Calu3 (cell line): ENCODE measurements at regions of chr1 and their contacts with region 1.

Region 1: GRCh38 chr1:40862008-40862863 is at the start of gene CITED4:
- DNase-seq: peak; percentile 97
- H3K4me3 Mint-ChIP-seq: peak within 1 kb of the TSS; percentile 91
- H3K27ac Mint-ChIP-seq: peak within 1 kb of the TSS; percentile 95
- H3K4me1 Mint-ChIP-seq: peaks cover 47% of the 10 kb centered on the region
- H3K27me3 Mint-ChIP-seq: peaks cover 18% of the 10 kb centered on the region
- CTCF ChIP-seq: peak; percentile 57
- total RNA-seq, gene CITED4: 81.2 and 85.2 TPM in 2 replicates

Region 2: DNA sequence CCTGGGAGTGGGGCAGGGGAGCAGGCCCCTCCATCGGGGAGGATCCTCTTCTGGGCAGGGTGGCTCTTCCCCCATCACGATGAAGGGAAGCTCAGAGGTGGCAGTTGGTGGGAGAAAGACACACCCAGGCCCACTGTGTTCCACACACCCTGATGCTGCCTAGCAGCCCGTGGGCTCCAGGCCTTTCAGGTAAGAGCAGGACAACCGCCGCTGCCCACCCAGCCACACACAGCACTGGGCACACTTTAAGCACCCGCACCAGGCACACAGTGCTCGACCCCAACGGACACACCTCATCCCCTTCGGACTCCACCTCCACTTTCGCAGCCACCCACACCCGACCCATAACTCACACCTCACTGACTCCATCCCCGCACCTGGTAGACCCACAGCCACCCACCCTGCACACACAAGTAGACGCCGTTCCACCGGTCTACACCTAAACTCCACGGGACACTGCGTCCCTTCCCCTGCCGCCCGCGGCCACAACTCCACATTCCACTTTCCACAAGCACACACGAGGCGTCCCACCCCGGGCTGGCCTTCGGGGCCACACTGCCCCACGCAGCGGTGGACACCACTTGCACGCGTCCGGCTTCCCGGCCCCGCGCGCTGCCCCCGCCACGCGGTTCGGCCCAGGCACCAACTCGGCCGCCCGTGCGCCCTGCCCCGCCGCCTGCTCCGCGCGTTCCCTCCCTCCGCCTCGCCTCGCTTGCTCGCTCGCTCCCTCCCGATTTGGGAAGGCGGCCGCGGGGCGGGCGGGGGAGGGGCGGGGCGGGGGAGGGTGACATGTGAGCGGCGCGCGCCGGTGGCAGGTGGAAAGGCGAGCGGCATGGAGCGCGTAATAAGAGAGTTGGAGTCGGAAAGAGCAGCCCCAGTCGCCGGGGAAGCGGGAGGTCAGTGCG is 79.0 kb before region 1 on chr1 and contains the start of gene KCNQ4:
- CTCF ChIA-PET with region 1: no interaction called
- intact Hi-C with region 1: no loop called
- DNase-seq: peak; percentile 47
- H3K4me3 Mint-ChIP-seq: peak within 1 kb of the TSS; percentile 71
- H3K27ac Mint-ChIP-seq: peak within 1 kb of the TSS; percentile 70
- H3K4me1 Mint-ChIP-seq: peaks cover 35% of the 10 kb centered on the region
- H3K27me3 Mint-ChIP-seq: peaks cover 52% of the 10 kb centered on the region
- CTCF ChIP-seq: no peak
- total RNA-seq, gene KCNQ4: 0.92 and 1.4 TPM in 2 replicates

Region 3: DNA sequence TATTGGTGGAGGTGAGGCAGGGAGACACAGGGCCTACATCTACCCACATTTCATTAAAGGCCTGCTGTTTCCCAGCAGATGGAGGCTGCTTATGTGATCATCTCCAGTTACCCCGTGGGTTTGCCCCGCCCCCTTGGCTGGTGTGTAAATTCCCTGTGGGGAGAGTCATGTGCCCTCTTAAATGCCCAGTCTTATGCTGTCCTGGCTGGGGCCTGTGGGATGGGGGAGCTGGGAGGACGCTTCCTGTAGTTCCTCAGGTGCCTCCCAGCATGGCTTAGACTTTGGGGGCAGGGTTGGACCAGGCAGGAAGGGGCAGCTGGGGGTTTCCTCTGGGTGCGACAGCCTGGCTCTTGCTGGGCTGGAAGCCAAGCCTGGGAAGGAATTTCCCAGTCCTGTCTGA is 15.5 kb after region 1 on chr1:
- CTCF ChIA-PET with region 1: interaction called, 11 read pairs
- intact Hi-C with region 1: no loop called
- DNase-seq: peak; percentile 88
- H3K4me3 Mint-ChIP-seq: no peak overlapping the region
- H3K27ac Mint-ChIP-seq: peak overlapping the region; percentile 96
- H3K4me1 Mint-ChIP-seq: peaks cover 68% of the 10 kb centered on the region
- H3K27me3 Mint-ChIP-seq: no peaks in the 10 kb centered on the region
- CTCF ChIP-seq: no peak

Region 4: GRCh38 chr1:40898431-40898901 is 36.2 kb after region 1 on chr1:
- CTCF ChIA-PET with region 1: interaction called, 9 read pairs
- intact Hi-C with region 1: loop called (anchors 1 kb)
- DNase-seq: peak; percentile 89
- H3K4me3 Mint-ChIP-seq: peak overlapping the region; percentile 39
- H3K27ac Mint-ChIP-seq: peak overlapping the region; percentile 92
- H3K4me1 Mint-ChIP-seq: peaks cover 65% of the 10 kb centered on the region
- H3K27me3 Mint-ChIP-seq: no peaks in the 10 kb centered on the region
- CTCF ChIP-seq: no peak

Region 5: DNA sequence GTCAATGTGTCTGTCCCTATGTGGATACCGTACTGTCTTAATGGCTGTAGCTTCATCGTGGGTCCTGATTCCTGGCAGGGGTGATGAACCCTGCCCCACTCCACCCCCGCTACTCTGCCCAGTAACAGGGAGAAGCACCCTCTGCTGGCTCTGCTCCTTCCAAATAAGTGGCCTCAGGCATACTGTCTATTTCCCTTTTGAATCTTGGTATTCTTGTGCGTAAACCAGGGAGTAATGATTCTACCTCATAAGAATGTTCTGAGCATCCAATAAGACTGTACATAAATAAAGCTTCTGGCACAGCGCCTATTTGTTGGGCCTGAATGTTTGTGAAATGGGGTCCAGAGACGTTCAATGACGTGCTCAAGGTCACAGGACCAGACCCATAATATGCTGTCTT is 82.1 kb after region 1 on chr1:
- CTCF ChIA-PET with region 1: interaction called, 82 read pairs
- intact Hi-C with region 1: loop called (anchors 1 kb)
- DNase-seq: peak; percentile 67
- H3K4me3 Mint-ChIP-seq: peak overlapping the region; percentile 13
- H3K27ac Mint-ChIP-seq: peak overlapping the region; percentile 86
- H3K4me1 Mint-ChIP-seq: peaks cover 49% of the 10 kb centered on the region
- H3K27me3 Mint-ChIP-seq: no peaks in the 10 kb centered on the region
- CTCF ChIP-seq: no peak